Tibial artery (tissue), 4 donors: ENCODE measurements at regions of chr20 and their contacts with region 1.

Region 1: DNA sequence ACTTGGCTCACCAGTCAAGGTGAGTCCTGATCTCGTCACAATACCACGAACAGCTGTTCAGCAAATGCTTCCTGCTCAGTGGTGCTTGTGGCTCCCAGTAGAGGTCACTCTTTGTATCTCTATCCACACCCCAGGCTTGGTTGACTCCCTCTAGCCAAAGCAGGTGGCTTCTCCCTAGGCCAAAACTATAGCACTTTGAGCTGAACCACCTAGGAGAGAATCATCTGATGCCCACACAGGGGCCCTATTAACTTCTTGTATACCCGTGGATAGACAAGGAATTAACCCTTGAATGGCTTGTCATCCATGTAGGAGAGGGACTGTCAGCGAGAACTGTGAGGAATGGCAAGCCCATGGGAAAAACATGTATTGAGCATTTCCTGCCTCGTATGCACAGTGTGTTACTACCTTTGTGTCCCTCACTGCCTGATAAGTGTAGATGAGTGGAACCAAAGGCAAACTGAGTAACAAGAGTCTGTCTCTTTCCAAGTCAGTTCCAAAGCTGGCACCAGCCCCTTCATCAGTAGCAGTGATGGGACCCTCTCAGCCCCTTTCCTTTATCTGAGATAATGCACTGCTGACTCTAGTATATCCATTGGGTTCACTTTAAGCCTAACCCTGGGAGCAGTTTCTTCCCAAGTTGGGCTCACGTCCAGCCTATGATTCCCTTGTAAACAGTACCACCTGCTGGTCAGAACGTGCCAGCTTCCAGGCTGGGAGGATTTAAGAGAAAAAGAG is 42.5 kb downstream of the EIF2S2 start:
- DNase-seq: peak; percentile 78 to 80
- H3K4me3 ChIP-seq: no peak overlapping the region
- H3K27ac ChIP-seq: peak overlapping the region in 1 of 2 donors; percentile 14
- H3K4me1 ChIP-seq: peaks cover 0 to 40% (median 22%) of the 10 kb centered on the region in 4 donors
- H3K27me3 ChIP-seq: no peaks in the 10 kb centered on the region
- CTCF ChIP-seq: peak; percentile 77 to 91

Region 2: GRCh38 chr20:33862709-33863403 is 206.7 kb before region 1 on chr20:
- intact Hi-C with region 1: loop called (anchors 5 kb)
- DNase-seq: peak; percentile 31 to 69
- H3K4me3 ChIP-seq: no peak overlapping the region
- H3K27ac ChIP-seq: no peak overlapping the region
- H3K4me1 ChIP-seq: peaks cover 0 to 8% (median 6%) of the 10 kb centered on the region in 4 donors
- H3K27me3 ChIP-seq: no peaks in the 10 kb centered on the region
- CTCF ChIP-seq: peak; percentile 61 to 63

Region 3: DNA sequence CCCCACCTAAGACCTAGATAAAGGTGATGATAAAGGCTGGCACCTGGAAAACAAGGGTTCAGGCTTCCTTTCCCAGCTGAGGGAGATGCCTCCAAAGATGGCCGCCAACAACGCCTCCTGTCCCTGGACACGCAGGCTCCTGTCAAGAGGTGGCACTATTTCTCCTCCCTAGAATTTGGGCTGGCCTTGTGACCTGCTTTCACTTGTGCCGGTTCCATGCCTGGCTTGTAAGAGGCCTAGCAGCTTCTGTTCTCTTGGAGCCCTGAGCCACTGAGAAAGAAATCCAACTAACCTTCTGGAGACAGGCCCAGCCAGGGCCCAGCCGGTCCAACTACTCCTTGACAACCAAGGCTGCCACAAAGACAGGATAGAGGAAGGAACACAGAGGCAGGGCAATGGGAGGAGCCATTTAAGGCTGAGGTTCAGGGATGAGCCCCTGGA is 136.0 kb before region 1 on chr20:
- intact Hi-C with region 1: loop called (anchors 5 kb)
- DNase-seq: peak; percentile 55 to 87
- H3K4me3 ChIP-seq: no peak overlapping the region
- H3K27ac ChIP-seq: peak overlapping the region; percentile 54 to 56
- H3K4me1 ChIP-seq: no peaks in the 10 kb centered on the region
- H3K27me3 ChIP-seq: no peaks in the 10 kb centered on the region
- CTCF ChIP-seq: peak; percentile 57 to 60

Region 4: DNA sequence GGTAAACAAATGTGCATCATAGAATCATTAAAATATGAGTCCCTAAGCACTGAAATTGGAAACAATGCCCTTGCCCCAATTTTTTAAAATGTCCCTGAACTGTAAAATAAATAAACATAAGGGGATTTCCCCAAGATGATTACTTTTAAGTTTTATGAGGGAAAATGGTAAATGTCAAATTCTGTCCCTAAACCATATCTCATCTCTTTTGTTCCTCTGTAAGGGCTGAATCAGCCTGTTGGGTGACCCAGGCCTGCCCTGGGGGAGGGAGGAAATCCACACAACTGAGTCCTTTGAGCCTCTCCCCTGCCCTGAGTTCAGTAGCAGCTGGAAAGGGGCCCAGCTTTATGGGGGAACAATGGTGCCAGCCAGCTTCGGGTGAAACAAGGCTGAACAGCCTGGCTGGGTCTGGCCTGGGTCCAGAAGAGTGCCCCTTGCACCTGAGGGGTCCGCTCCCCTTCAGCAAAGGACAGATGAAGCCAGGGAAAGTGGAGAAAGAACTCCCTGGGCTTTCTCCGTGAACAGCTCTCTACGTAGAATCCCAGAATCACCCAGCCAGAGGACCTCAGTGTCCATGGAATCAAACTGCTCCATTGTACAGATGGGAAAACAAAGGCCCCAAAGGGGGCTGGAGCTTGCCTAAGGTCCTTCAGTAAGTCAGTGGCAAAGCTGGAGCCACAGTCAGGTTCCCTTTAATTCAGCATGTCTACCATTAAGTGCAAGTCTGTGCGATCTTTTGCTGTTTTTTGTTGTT is 265.3 kb after region 1 on chr20:
- intact Hi-C with region 1: no loop called
- DNase-seq: no peak
- H3K4me3 ChIP-seq: no peak overlapping the region
- H3K27ac ChIP-seq: no peak overlapping the region
- H3K4me1 ChIP-seq: no peaks in the 10 kb centered on the region
- H3K27me3 ChIP-seq: no peaks in the 10 kb centered on the region
- CTCF ChIP-seq: no peak